ENCODE measurements at regions of chr1 and their contacts with region 1.

Region 1: DNA sequence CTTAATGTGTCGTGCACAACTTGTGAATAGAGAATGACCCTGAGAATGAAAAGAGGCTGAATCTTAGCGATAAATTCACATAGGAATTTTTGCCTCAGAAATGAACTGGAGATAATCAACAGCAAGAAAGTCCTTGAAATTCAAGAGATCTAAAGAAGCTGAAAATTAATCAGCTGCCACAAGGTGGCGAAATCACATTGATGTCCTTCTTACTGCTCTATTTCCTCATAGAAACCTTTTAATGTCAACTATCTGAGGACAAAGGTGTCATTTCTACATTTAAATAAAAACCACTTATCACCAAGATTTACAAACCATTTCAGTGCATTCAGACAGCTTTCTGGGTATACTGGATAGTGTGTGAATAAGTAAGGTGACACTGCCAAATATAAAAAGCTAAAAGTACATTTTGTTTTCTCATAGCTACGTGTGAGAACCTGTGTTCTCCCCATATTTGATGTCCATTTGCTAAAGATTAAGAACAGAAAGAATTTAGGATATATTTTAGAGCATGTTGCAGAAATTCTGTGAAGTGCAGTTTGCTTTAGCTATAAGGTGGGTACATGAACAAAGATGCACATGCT is 485.3 kb upstream of the PTBP2 start:
- DNase-seq: peak in 1 of 2 experiments; percentile 5
- H3K4me3 ChIP-seq: no peak overlapping the region
- H3K4me3 Mint-ChIP-seq: no peak overlapping the region
- H3K27ac Mint-ChIP-seq: no peak overlapping the region
- H3K4me1 ChIP-seq: no peaks in the 10 kb centered on the region
- H3K4me1 Mint-ChIP-seq: peaks cover 6% of the 10 kb centered on the region
- H3K27me3 ChIP-seq: no peaks in the 10 kb centered on the region
- H3K27me3 Mint-ChIP-seq: no peaks in the 10 kb centered on the region
- CTCF ChIP-seq: peak in 1 of 2 experiments; percentile 17

Region 2: DNA sequence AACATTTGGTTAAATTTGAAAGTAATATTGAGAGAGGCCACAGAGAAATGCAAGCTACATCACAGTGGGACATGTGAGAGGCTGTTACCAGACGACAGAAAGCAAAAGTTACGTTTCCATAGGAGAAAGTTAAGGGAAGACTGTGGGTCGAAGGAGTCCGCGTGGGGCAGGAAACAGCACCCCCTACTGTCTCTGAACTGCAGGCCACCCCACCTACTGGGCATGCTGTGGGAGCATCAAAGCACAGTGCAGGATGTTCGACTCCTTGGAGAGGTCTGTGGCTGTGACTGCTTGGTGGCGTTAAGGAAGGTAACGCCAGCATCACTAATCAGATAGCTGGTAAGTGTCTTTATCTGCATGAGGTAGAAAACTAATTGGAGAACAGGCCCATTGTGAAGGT is 609.2 kb after region 1 on chr1:
- CTCF ChIA-PET with region 1: no interaction called
- POLR2A ChIA-PET with region 1: no interaction called
- intact Hi-C with region 1: loop called (anchors 10 kb)
- DNase-seq: peak in 1 of 2 experiments; percentile 30
- H3K4me3 ChIP-seq: no peak overlapping the region
- H3K4me3 Mint-ChIP-seq: no peak overlapping the region
- H3K27ac Mint-ChIP-seq: no peak overlapping the region
- H3K4me1 ChIP-seq: no peaks in the 10 kb centered on the region
- H3K4me1 Mint-ChIP-seq: no peaks in the 10 kb centered on the region
- H3K27me3 ChIP-seq: no peaks in the 10 kb centered on the region
- H3K27me3 Mint-ChIP-seq: no peaks in the 10 kb centered on the region
- CTCF ChIP-seq: peak; percentile 12 to 32

Measured in Caco-2 (cell line).